Activated naive CD4-positive, alpha-beta T cell treated with anti-CD3 and anti-CD28 coated beads for 36 hours (primary cell): ENCODE measurements at regions of chr2 and their contacts with region 1.

Region 1: GRCh38 chr2:134668821-134669220 is 50.0 kb downstream of the TMEM163 start:
- DNase-seq: peak; percentile 95
- H3K4me3 Mint-ChIP-seq: no peak overlapping the region
- H3K27ac Mint-ChIP-seq: no peak overlapping the region
- H3K4me1 Mint-ChIP-seq: peaks cover 63% of the 10 kb centered on the region
- H3K27me3 Mint-ChIP-seq: peaks cover 29% of the 10 kb centered on the region

Region 2: GRCh38 chr2:134253804-134254203 is 415.0 kb before region 1 on chr2 and contains the start of gene MGAT5:
- CTCF ChIA-PET with region 1: no interaction called
- intact Hi-C with region 1: loop called (anchors 5 kb)
- DNase-seq: no peak
- H3K4me3 Mint-ChIP-seq: no peak within 1 kb of the TSS
- H3K27ac Mint-ChIP-seq: no peak within 1 kb of the TSS
- H3K4me1 Mint-ChIP-seq: peaks cover 82% of the 10 kb centered on the region
- H3K27me3 Mint-ChIP-seq: peaks cover 2% of the 10 kb centered on the region
- total RNA-seq, gene MGAT5: 11.6 to 13.0 TPM

Region 3: DNA sequence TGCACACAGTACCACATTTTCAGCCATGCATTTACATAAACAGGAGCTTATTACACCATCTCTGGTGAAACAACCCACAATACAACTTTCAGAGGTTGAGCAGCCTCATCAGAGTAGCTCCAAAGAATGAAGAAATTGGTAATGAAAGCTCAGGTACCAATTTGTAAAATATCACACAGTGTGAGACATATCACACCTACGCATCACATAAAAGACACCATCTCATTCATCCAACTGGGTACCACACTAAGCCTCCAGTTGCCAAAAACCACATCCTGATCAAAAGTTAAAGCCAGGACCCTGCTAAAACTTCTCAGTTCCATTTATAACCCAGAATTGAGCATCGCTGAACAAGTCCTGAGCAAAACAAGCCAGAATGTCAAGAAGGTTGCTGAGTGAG is 45.4 kb after region 1 on chr2:
- CTCF ChIA-PET with region 1: interaction called, 3 read pairs
- intact Hi-C with region 1: loop called (anchors 1 kb)
- DNase-seq: peak; percentile 18
- H3K4me3 Mint-ChIP-seq: no peak overlapping the region
- H3K27ac Mint-ChIP-seq: no peak overlapping the region
- H3K4me1 Mint-ChIP-seq: peaks cover 17% of the 10 kb centered on the region
- H3K27me3 Mint-ChIP-seq: peaks cover 57% of the 10 kb centered on the region